ENCODE measurements at regions of chr13 and their contacts with region 1.

Region 1: DNA sequence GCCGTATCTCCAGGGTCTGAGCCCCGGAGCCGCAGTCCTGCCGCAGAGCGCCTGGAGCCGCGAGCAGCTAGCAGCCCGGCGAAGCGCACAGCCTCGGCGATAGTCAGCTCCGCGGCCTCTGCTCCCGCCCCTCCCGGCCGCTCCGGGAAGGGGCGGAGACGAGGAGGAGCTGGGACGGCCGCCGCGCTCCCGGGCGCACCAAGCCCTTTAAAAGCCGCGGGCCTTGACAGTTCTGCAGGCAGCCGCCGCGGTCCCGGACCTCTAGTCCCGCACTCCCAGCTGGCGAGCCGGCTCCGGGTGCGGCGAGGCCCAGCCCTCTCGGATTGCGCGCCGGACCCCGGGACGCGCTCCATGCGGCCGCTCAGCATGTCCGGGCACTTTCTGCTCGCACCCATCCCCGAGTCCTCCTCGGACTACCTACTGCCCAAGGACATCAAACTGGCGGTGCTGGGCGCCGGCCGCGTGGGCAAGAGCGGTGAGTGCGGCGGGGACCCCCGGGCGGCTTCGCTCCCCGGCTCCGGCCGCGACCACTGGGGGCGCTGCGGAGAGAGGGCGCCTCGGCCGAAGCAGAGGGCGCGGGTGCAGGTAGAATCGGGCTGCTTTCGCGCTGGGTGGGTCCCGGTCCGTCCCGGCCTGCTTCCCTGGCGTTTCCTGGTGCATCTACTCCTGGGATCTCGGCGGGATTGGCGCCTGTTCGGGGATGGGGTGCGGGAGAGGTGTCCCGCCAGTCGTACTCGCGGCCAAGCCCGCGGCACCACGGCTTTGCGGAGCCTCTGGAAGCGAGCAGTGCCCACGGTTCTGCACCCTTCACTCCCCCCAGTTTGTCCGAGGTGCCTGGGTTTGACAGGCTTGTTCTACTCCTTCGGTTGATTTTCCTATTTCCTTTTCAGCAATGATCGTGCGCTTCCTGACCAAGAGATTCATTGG is at the start of gene RASL11A:
- DNase-seq: peak; percentile 53 to 87 (median 76)
- ATAC-seq: peak; percentile 92
- H3K4me3 ChIP-seq: peak within 1 kb of the TSS; percentile 90
- H3K4me3 Mint-ChIP-seq: peak within 1 kb of the TSS; percentile 88 to 96 (median 92)
- H3K27ac ChIP-seq: peak within 1 kb of the TSS; percentile 75
- H3K27ac Mint-ChIP-seq: peak within 1 kb of the TSS; percentile 29 to 82 (median 75)
- H3K4me1 ChIP-seq: peaks cover 0 to 4% of the 10 kb centered on the region in 2 donors
- H3K4me1 Mint-ChIP-seq: peaks cover 9 to 35% (median 19%) of the 10 kb centered on the region in 7 donors
- H3K27me3 ChIP-seq: peaks cover 0 to 3% of the 10 kb centered on the region in 2 donors
- H3K27me3 Mint-ChIP-seq: peaks cover 0 to 45% (median 9%) of the 10 kb centered on the region in 5 donors
- total RNA-seq, gene RASL11A: 0.44 to 3.0 (median 0.86) TPM

Region 2: DNA sequence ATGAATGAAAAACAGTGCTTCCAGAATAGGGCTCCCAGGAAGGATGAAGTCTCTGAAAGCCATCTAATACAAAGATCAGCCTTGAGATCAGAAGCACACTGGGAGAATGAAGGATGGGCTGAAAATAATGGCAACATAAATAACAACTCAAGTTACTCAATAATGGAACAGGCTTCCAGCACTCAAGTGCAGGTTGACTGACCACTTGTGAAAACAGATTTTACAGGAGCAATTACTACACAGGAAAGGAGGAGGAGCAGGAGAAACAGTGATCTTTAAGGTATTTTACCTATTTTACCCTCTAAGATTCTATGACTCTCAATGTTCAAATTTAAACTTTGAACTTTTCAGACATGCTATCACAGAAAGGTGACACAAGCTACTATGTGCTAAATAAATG is 205.3 kb before region 1 on chr13:
- CTCF ChIA-PET with region 1: no interaction called
- POLR2A ChIA-PET with region 1: no interaction called
- intact Hi-C with region 1: loop called in 1 of 2 experiments (anchors 10 kb)
- DNase-seq: no peak
- ATAC-seq: no peak
- H3K4me3 ChIP-seq: no peak overlapping the region
- H3K4me3 Mint-ChIP-seq: no peak overlapping the region
- H3K27ac ChIP-seq: no peak overlapping the region
- H3K27ac Mint-ChIP-seq: no peak overlapping the region
- H3K4me1 ChIP-seq: no peaks in the 10 kb centered on the region
- H3K4me1 Mint-ChIP-seq: peaks cover 0 to 18% (median 7%) of the 10 kb centered on the region in 7 donors
- H3K27me3 ChIP-seq: no peaks in the 10 kb centered on the region
- H3K27me3 Mint-ChIP-seq: no peaks in the 10 kb centered on the region

Region 3: DNA sequence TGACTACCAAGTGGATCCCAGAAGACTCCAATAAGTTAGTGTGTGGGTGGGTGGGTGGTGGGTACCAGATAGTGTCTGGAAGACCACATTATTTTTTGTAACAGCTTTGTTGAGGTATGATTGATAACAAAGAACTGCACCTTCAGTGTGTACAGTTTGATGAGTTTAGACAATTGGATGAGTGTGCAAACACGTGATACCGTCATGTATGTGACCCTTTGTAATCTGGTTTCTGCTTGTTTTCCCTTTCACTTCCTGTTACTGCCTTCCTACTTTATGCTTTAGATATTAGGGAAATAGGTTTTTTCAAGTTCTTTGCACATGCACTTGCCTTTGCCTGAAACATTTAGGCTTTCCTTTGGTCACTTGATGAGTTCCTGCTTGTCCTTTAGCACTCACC is 11.0 kb before region 1 on chr13:
- CTCF ChIA-PET with region 1: interaction called, 5 read pairs
- POLR2A ChIA-PET with region 1: interaction called, 5 read pairs
- intact Hi-C with region 1: loop called in 1 of 2 experiments (anchors 1 kb)
- DNase-seq: no peak
- ATAC-seq: peak; percentile 61
- H3K4me3 ChIP-seq: no peak overlapping the region
- H3K4me3 Mint-ChIP-seq: peak overlapping the region in 2 of 10 donors; percentile 1 to 37
- H3K27ac ChIP-seq: peak overlapping the region; percentile 10
- H3K27ac Mint-ChIP-seq: peak overlapping the region in 8 of 9 donors; percentile 25 to 91 (median 58)
- H3K4me1 ChIP-seq: peaks cover 1 to 4% of the 10 kb centered on the region in 2 donors
- H3K4me1 Mint-ChIP-seq: peaks cover 25 to 90% (median 65%) of the 10 kb centered on the region in 7 donors
- H3K27me3 ChIP-seq: no peaks in the 10 kb centered on the region
- H3K27me3 Mint-ChIP-seq: no peaks in the 10 kb centered on the region

Region 4: GRCh38 chr13:27302643-27303262 is 31.9 kb after region 1 on chr13:
- CTCF ChIA-PET with region 1: interaction called, 5 read pairs
- POLR2A ChIA-PET with region 1: interaction called, 5 read pairs
- intact Hi-C with region 1: loop called in 1 of 2 experiments (anchors 2 kb)
- DNase-seq: peak in 6 of 9 donors; percentile 41 to 66 (median 56)
- ATAC-seq: peak; percentile 75
- H3K4me3 ChIP-seq: no peak overlapping the region
- H3K4me3 Mint-ChIP-seq: peak overlapping the region in 8 of 10 donors; percentile 47 to 74 (median 65)
- H3K27ac ChIP-seq: peak overlapping the region; percentile 56
- H3K27ac Mint-ChIP-seq: peak overlapping the region in 8 of 9 donors; percentile 64 to 93 (median 83)
- H3K4me1 ChIP-seq: peaks cover 0 to 20% of the 10 kb centered on the region in 2 donors
- H3K4me1 Mint-ChIP-seq: peaks cover 10 to 60% (median 39%) of the 10 kb centered on the region in 7 donors
- H3K27me3 ChIP-seq: no peaks in the 10 kb centered on the region
- H3K27me3 Mint-ChIP-seq: peaks cover 0 to 2% (median 0%) of the 10 kb centered on the region in 5 donors

Region 5: GRCh38 chr13:27362064-27362883 is 91.4 kb after region 1 on chr13:
- CTCF ChIA-PET with region 1: no interaction called
- POLR2A ChIA-PET with region 1: no interaction called
- intact Hi-C with region 1: loop called (anchors 1 to 5 kb)
- DNase-seq: peak; percentile 51 to 82 (median 66)
- ATAC-seq: peak; percentile 95
- H3K4me3 ChIP-seq: peak overlapping the region; percentile 47
- H3K4me3 Mint-ChIP-seq: peak overlapping the region; percentile 24 to 83 (median 45)
- H3K27ac ChIP-seq: no peak overlapping the region
- H3K27ac Mint-ChIP-seq: peak overlapping the region in 1 of 9 donors; percentile 35
- H3K4me1 ChIP-seq: peaks cover 0 to 4% of the 10 kb centered on the region in 2 donors
- H3K4me1 Mint-ChIP-seq: peaks cover 0 to 9% (median 5%) of the 10 kb centered on the region in 7 donors
- H3K27me3 ChIP-seq: peaks cover 0 to 7% of the 10 kb centered on the region in 2 donors
- H3K27me3 Mint-ChIP-seq: peaks cover 13 to 50% (median 25%) of the 10 kb centered on the region in 5 donors